Panc1 (cell line): ENCODE measurements at regions of chr1 and their contacts with region 1.

Region 1: DNA sequence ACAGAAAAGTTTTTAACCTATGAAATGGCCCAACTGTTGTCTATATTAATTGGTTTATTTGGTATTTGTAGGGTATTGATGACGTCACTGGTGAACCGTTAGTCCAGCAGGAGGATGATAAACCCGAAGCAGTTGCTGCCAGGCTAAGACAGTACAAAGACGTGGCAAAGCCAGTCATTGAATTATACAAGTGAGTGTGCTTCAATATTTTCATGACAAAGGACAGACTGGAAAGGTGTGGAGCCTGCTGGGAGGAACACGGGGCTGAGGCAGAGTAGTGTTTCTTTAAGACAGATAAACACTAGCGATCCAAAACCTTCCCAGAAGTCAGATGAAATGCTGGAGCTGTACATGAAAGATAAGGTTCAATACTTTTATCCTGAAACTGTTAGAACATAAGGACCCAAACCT is 76.7 kb downstream of the AK4 start:
- DNase-seq: no peak
- ATAC-seq: no peak
- H3K4me3 ChIP-seq: no peak overlapping the region
- H3K27ac ChIP-seq: no peak overlapping the region
- H3K4me1 ChIP-seq: no peaks in the 10 kb centered on the region
- H3K27me3 ChIP-seq: no peaks in the 10 kb centered on the region
- CTCF ChIP-seq: no peak

Region 2: DNA sequence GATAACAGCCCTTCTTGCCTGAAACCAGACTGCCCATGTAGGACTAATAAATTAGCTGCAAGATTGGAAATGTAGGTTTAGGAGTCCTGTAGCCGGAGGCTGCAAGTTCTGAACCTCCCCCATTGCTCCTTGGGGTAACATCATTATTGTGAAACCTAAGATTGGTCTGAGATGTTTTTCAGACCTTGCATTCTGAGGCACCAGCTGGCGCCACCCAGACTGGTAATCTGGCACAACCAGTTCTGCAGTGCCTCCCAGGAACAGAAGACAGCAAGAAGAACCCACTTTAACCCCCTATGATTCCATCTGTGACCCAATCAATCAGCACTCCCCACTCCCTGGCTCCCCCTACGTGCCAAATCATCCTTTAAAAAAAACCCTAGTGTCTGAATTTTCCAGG is 73.0 kb after region 1 on chr1:
- CTCF ChIA-PET with region 1: no interaction called
- POLR2A ChIA-PET with region 1: no interaction called
- in situ Hi-C with region 1: no loop called
- intact Hi-C with region 1: loop called (anchors 2 kb)
- DNase-seq: no peak
- ATAC-seq: no peak
- H3K4me3 ChIP-seq: no peak overlapping the region
- H3K27ac ChIP-seq: no peak overlapping the region
- H3K4me1 ChIP-seq: no peaks in the 10 kb centered on the region
- H3K27me3 ChIP-seq: no peaks in the 10 kb centered on the region
- CTCF ChIP-seq: no peak